ENCODE measurements at regions of chr2 and their contacts with region 1.

Region 1: DNA sequence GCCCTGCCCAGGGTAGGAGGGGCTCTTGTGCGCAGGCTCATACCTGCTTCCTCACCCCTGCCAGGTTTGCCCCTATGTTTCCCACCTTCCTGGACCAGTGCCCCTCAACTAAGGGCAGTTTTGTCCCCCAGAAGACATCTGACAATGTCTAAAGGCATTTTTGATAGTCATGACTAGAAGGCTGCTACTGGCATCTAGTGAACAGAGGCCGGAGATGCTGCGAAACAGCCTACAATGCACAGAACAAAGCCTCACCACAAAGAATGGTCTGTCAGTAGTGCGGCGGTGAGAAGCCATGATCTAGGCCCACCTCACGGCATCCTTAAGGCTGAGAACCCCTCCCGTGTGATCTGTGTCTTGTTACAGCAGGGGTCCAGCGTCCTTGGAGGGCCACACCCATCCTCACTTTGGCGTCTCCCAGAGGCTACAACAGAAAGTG is 96.0 kb downstream of the TMEM17 start:
- DNase-seq: no peak
- ATAC-seq: no peak
- H3K4me3 ChIP-seq: no peak overlapping the region
- H3K27ac ChIP-seq: no peak overlapping the region
- H3K4me1 ChIP-seq: peaks cover 19% of the 10 kb centered on the region
- H3K27me3 ChIP-seq: no peaks in the 10 kb centered on the region
- CTCF ChIP-seq: no peak

Region 2: DNA sequence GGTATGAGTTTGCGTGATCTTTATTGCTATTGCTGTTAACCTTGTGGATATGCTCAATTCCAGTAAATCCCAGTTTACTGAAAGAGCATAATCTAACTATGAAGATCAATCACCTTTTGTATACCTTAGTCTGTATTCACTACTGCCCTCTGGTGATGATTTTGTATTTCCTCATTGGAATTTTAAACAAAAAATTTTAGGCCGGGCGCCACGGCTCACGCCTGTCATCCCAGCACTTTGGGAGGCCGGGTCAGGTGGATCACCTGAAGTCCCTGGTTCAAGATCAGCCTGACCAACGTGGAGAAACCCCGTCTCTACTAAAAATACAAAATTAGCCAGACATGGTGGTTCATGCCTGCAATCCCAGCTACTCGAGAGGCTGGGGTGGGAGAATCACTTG is 499.4 kb before region 1 on chr2:
- intact Hi-C with region 1: loop called (anchors 5 kb)
- DNase-seq: no peak
- ATAC-seq: peak; percentile 19
- H3K4me3 ChIP-seq: no peak overlapping the region
- H3K27ac ChIP-seq: no peak overlapping the region
- H3K4me1 ChIP-seq: peaks cover 13% of the 10 kb centered on the region
- H3K27me3 ChIP-seq: no peaks in the 10 kb centered on the region
- CTCF ChIP-seq: peak; percentile 17

Region 3: GRCh38 chr2:61993444-61994024 is 416.5 kb before region 1 on chr2:
- intact Hi-C with region 1: loop called (anchors 5 kb)
- DNase-seq: no peak
- ATAC-seq: peak; percentile 76
- H3K4me3 ChIP-seq: no peak overlapping the region
- H3K27ac ChIP-seq: no peak overlapping the region
- H3K4me1 ChIP-seq: peaks cover 8% of the 10 kb centered on the region
- H3K27me3 ChIP-seq: no peaks in the 10 kb centered on the region
- CTCF ChIP-seq: peak; percentile 64

Region 4: DNA sequence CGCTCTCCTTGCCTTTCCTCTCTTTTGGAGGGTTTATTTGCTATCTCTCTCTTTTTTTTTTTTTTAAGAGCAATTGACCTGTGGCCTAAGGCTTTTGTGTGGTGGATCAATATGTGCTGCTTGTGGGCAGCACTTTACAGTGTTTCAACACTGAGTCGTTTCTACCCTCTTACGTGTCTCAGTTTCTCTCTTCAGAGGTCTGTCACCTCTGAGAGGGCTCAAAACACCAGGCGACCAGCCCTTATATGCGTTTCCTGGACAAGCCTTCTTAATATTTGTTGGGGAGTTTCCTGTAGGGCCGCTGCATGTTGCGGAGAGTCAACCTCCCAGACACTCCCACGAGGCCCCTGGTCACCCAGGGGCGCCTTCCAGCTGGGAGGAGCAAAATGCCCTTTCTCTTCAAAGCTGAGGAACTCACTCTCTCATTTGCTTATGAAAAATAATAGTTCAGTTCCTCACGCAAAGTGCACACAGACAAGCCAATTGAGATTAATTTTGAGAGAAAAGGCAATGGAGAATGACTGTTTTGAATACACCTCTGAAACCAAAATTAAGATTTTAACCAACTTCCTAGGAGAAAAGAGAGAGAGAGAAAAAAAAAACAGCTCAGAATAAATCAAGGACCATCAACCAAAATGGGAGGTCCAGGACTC is 310.4 kb before region 1 on chr2:
- intact Hi-C with region 1: no loop called
- DNase-seq: no peak
- ATAC-seq: no peak
- H3K4me3 ChIP-seq: no peak overlapping the region
- H3K27ac ChIP-seq: no peak overlapping the region
- H3K4me1 ChIP-seq: no peaks in the 10 kb centered on the region
- H3K27me3 ChIP-seq: no peaks in the 10 kb centered on the region
- CTCF ChIP-seq: no peak